PC-3 (cell line): ENCODE measurements at regions of chr14 and their contacts with region 1.

Region 1: DNA sequence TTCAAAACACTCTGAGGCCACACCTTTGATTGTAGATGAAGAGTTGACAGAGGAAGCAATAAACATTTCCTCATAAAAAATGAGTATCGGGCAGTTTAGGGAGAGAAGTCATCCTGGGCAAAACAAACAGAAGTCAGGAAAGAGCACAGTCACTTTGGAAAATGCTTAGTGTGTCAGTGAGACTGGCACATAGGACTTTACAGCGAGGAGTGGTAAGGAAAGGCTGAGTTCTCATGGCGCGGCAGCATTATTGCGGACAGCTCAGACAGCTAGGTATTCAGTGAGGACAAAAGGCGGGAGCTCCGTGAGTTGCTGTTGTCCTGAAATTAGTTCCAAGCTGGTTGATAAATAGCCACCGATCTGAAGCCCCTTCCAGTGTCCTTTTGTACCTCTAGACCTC is 229.9 kb downstream of the SNAPC1 start:
- DNase-seq: peak; percentile 97
- ATAC-seq: peak; percentile 97
- H3K4me3 ChIP-seq: peak overlapping the region; percentile 59
- H3K27ac ChIP-seq: peak overlapping the region; percentile 98
- H3K4me1 ChIP-seq: peaks cover 35% of the 10 kb centered on the region
- H3K27me3 ChIP-seq: no peaks in the 10 kb centered on the region
- CTCF ChIP-seq: no peak

Region 2: GRCh38 chr14:61884711-61885110 is 107.4 kb before region 1 on chr14:
- CTCF ChIA-PET with region 1: no interaction called
- POLR2A ChIA-PET with region 1: no interaction called
- intact Hi-C with region 1: loop called (anchors 1 kb)
- DNase-seq: peak; percentile 80
- ATAC-seq: peak; percentile 16; the same call in 1 of the 2 replicates
- H3K4me3 ChIP-seq: peak overlapping the region; percentile 45; the same call in 1 of the 2 replicates
- H3K27ac ChIP-seq: peak overlapping the region; percentile 91
- H3K4me1 ChIP-seq: peaks cover 24% of the 10 kb centered on the region
- H3K27me3 ChIP-seq: no peaks in the 10 kb centered on the region
- CTCF ChIP-seq: no peak

Region 3: GRCh38 chr14:61965030-61965745 is 27.0 kb before region 1 on chr14:
- CTCF ChIA-PET with region 1: no interaction called
- POLR2A ChIA-PET with region 1: no interaction called
- intact Hi-C with region 1: loop called (anchors 1 kb)
- DNase-seq: peak; percentile 87
- ATAC-seq: peak; percentile 88
- H3K4me3 ChIP-seq: no peak overlapping the region
- H3K27ac ChIP-seq: peak overlapping the region; percentile 55
- H3K4me1 ChIP-seq: peaks cover 25% of the 10 kb centered on the region
- H3K27me3 ChIP-seq: no peaks in the 10 kb centered on the region
- CTCF ChIP-seq: no peak

Region 4: GRCh38 chr14:62029569-62029924 is 37.4 kb after region 1 on chr14:
- CTCF ChIA-PET with region 1: no interaction called
- POLR2A ChIA-PET with region 1: interaction called, 3 read pairs
- intact Hi-C with region 1: loop called (anchors 1 kb)
- DNase-seq: no peak
- ATAC-seq: no peak
- H3K4me3 ChIP-seq: no peak overlapping the region
- H3K27ac ChIP-seq: no peak overlapping the region
- H3K4me1 ChIP-seq: peaks cover 38% of the 10 kb centered on the region
- H3K27me3 ChIP-seq: no peaks in the 10 kb centered on the region
- CTCF ChIP-seq: no peak

Region 5: GRCh38 chr14:62162998-62163589 is 171.0 kb after region 1 on chr14:
- CTCF ChIA-PET with region 1: no interaction called
- POLR2A ChIA-PET with region 1: no interaction called
- intact Hi-C with region 1: no loop called
- DNase-seq: peak; percentile 79
- ATAC-seq: peak; percentile 92
- H3K4me3 ChIP-seq: no peak overlapping the region
- H3K27ac ChIP-seq: no peak overlapping the region
- H3K4me1 ChIP-seq: no peaks in the 10 kb centered on the region
- H3K27me3 ChIP-seq: peaks cover 43% of the 10 kb centered on the region
- CTCF ChIP-seq: peak; percentile 95